ENCODE measurements at regions of chr14 and their contacts with region 1.

Region 1: GRCh38 chr14:60331201-60332045 is 82.4 kb downstream of the PPM1A start:
- DNase-seq: peak; percentile 70 to 77 (median 75)
- H3K4me3 ChIP-seq: peak overlapping the region; percentile 58 to 84
- H3K4me3 Mint-ChIP-seq: peak overlapping the region; percentile 93 to 100 (median 98)
- H3K27ac ChIP-seq: peak overlapping the region; percentile 33
- H3K27ac Mint-ChIP-seq: peak overlapping the region; percentile 75 to 98 (median 95)
- H3K4me1 ChIP-seq: peaks cover 21% of the 10 kb centered on the region
- H3K4me1 Mint-ChIP-seq: peaks cover 19 to 33% (median 26%) of the 10 kb centered on the region in 4 donors
- H3K27me3 ChIP-seq: no peaks in the 10 kb centered on the region
- H3K27me3 Mint-ChIP-seq: peaks cover 9 to 42% of the 10 kb centered on the region in 2 donors

Region 2: GRCh38 chr14:60106339-60106738 is 225.1 kb before region 1 on chr14:
- CTCF ChIA-PET with region 1: no interaction called
- POLR2A ChIA-PET with region 1: no interaction called
- intact Hi-C with region 1: no loop called
- DNase-seq: no peak
- H3K4me3 ChIP-seq: no peak overlapping the region
- H3K4me3 Mint-ChIP-seq: no peak overlapping the region
- H3K27ac ChIP-seq: no peak overlapping the region
- H3K27ac Mint-ChIP-seq: peak overlapping the region in 3 of 7 donors; percentile 31 to 72 (median 70)
- H3K4me1 ChIP-seq: no peaks in the 10 kb centered on the region
- H3K4me1 Mint-ChIP-seq: peaks cover 16 to 44% (median 29%) of the 10 kb centered on the region in 4 donors
- H3K27me3 ChIP-seq: no peaks in the 10 kb centered on the region
- H3K27me3 Mint-ChIP-seq: no peaks in the 10 kb centered on the region

Region 3: GRCh38 chr14:60195179-60195810 is 136.1 kb before region 1 on chr14:
- CTCF ChIA-PET with region 1: interaction called, 5 read pairs
- POLR2A ChIA-PET with region 1: no interaction called
- intact Hi-C with region 1: loop called (anchors 5 kb)
- DNase-seq: peak in 1 of 5 donors; percentile 6
- H3K4me3 ChIP-seq: no peak overlapping the region
- H3K4me3 Mint-ChIP-seq: no peak overlapping the region
- H3K27ac ChIP-seq: no peak overlapping the region
- H3K27ac Mint-ChIP-seq: no peak overlapping the region
- H3K4me1 ChIP-seq: no peaks in the 10 kb centered on the region
- H3K4me1 Mint-ChIP-seq: peaks cover 0 to 5% (median under 1%) of the 10 kb centered on the region in 4 donors
- H3K27me3 ChIP-seq: no peaks in the 10 kb centered on the region
- H3K27me3 Mint-ChIP-seq: peaks cover 5% of the 10 kb centered on the region in 2 donors

Region 4: GRCh38 chr14:60294411-60295069 is 36.9 kb before region 1 on chr14:
- CTCF ChIA-PET with region 1: interaction called, 4 read pairs
- POLR2A ChIA-PET with region 1: no interaction called
- intact Hi-C with region 1: loop called (anchors 5 kb)
- DNase-seq: no peak
- H3K4me3 ChIP-seq: no peak overlapping the region
- H3K4me3 Mint-ChIP-seq: no peak overlapping the region
- H3K27ac ChIP-seq: no peak overlapping the region
- H3K27ac Mint-ChIP-seq: no peak overlapping the region
- H3K4me1 ChIP-seq: no peaks in the 10 kb centered on the region
- H3K4me1 Mint-ChIP-seq: no peaks in the 10 kb centered on the region
- H3K27me3 ChIP-seq: no peaks in the 10 kb centered on the region
- H3K27me3 Mint-ChIP-seq: no peaks in the 10 kb centered on the region

Region 5: GRCh38 chr14:60349663-60350365 is 18.4 kb after region 1 on chr14:
- CTCF ChIA-PET with region 1: interaction called, 24 read pairs
- POLR2A ChIA-PET with region 1: no interaction called
- intact Hi-C with region 1: no loop called
- DNase-seq: peak in 3 of 5 donors; percentile 15 to 26 (median 26)
- H3K4me3 ChIP-seq: no peak overlapping the region
- H3K4me3 Mint-ChIP-seq: no peak overlapping the region
- H3K27ac ChIP-seq: no peak overlapping the region
- H3K27ac Mint-ChIP-seq: no peak overlapping the region
- H3K4me1 ChIP-seq: no peaks in the 10 kb centered on the region
- H3K4me1 Mint-ChIP-seq: peaks cover 1 to 7% (median 5%) of the 10 kb centered on the region in 4 donors
- H3K27me3 ChIP-seq: no peaks in the 10 kb centered on the region
- H3K27me3 Mint-ChIP-seq: peaks cover 1 to 8% of the 10 kb centered on the region in 2 donors

Region 6: DNA sequence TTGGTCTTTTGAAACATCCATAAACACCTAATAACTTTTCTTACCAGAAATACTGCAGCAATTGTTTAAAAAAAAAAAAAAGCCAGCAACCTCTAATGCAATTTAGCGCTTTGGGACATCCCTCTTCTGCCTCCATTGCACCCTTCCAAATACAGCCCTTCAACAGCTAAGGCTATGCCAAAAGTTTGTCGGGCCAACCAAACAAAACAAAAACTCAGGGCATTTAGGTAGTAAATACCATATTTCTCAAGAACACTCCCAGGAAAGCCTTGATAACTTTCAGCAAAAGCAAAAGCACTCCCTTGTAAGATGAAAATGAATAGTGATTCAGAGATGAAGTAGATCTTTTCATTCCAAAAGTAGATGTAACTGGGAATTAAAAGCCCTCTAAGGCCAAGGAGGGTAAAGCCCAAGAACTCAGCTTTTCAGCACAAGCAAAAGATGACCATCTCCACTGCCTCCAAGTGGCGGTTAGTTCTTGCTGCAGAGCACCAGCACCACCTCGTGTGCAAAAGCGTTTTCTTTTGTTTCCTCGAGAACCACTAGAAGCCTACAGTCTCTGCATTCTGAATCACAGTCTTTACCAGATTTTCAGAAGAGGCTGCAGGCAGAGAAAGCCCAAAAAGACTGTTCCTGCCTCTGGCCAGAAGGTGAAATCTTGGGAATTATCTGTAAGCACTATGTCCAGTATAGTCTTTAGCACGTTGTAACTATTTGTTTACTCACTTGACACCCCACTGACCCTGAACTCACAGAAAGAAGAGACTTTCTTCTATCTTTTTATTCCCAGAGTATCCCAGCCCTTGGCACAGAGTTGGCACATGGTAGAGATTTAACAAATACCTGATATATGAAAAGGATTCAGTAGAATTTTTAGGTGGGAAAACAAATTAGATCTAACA is 230.7 kb after region 1 on chr14:
- CTCF ChIA-PET with region 1: interaction called, 3 read pairs
- POLR2A ChIA-PET with region 1: no interaction called
- intact Hi-C with region 1: loop called (anchors 10 kb)
- DNase-seq: peak in 1 of 5 donors; percentile 4
- H3K4me3 ChIP-seq: no peak overlapping the region
- H3K4me3 Mint-ChIP-seq: no peak overlapping the region
- H3K27ac ChIP-seq: no peak overlapping the region
- H3K27ac Mint-ChIP-seq: no peak overlapping the region
- H3K4me1 ChIP-seq: no peaks in the 10 kb centered on the region
- H3K4me1 Mint-ChIP-seq: no peaks in the 10 kb centered on the region
- H3K27me3 ChIP-seq: no peaks in the 10 kb centered on the region
- H3K27me3 Mint-ChIP-seq: peaks cover 0 to 4% of the 10 kb centered on the region in 2 donors